Heart right ventricle (tissue), 16 donors: ENCODE measurements at regions of chr5 and their contacts with region 1.

Region 1: DNA sequence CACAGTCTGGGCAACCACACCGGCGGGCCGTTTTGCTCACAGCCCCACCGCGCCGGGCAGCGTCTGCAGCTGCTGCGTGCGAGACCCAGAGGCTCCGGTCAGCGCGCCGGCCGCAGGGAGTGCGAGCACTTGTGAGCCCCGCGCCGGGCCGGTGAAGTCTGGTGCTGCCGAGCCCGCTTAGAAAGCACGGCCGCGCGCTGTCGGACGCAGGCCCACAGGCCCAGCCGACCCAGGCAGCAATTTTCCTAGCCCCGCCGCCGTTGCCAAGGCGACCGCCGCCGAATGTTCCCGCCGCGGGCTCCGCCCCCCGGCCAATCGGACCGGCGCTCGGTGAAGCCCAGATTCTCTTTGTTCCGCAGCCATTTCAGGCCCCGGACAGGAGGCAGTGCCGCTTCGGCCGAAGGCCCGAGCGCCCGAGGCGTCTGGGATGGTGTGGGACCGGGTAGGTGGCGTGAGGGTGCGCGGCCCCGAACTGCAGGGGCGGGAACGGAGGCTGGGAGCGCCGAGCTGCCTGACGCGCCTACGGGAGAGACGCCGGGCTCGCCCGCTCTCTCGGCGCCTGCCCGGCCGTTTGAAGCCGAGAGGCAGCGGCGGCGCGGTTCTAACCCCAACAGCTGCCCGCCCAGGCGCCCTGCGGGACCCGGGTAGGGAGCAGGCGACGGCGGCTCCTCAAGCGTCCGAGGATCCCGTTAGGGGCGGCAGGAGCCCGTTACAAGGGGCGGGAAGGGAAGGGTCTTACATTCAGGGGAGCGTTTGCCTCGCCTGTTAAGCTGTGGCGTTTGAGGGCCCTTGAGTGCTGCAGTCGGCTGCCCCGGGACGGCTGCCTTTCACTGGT is at the start of gene TNPO1:
- DNase-seq: peak; percentile 94 to 95
- ATAC-seq: peak; percentile 94 to 98 (median 96)
- H3K4me3 ChIP-seq: peak within 1 kb of the TSS; percentile 68 to 89 (median 81)
- H3K27ac ChIP-seq: peak within 1 kb of the TSS; percentile 86 to 98 (median 96)
- H3K4me1 ChIP-seq: peaks cover 0 to 35% (median 26%) of the 10 kb centered on the region in 9 donors
- H3K27me3 ChIP-seq: no peaks in the 10 kb centered on the region
- CTCF ChIP-seq: no peak
- total RNA-seq, gene TNPO1: 55.5 to 78.0 (median 70.4) TPM

Region 2: GRCh38 chr5:72366324-72366976 is 450.1 kb before region 1 on chr5:
- intact Hi-C with region 1: loop called in 6 of 10 experiments (anchors 5 to 10 kb)
- DNase-seq: peak; percentile 16 to 84
- ATAC-seq: peak; percentile 85 to 96 (median 90)
- H3K4me3 ChIP-seq: no peak overlapping the region
- H3K27ac ChIP-seq: peak overlapping the region in 5 of 10 donors; percentile 2 to 68 (median 49)
- H3K4me1 ChIP-seq: peaks cover 0 to 47% (median 11%) of the 10 kb centered on the region in 9 donors
- H3K27me3 ChIP-seq: no peaks in the 10 kb centered on the region
- CTCF ChIP-seq: peak; percentile 63 to 92 (median 80)

Region 3: GRCh38 chr5:72556351-72557166 is 260.0 kb before region 1 on chr5:
- intact Hi-C with region 1: loop called in 2 of 10 experiments (anchors 5 to 10 kb)
- DNase-seq: peak; percentile 45 to 69
- ATAC-seq: peak; percentile 73 to 90 (median 82)
- H3K4me3 ChIP-seq: peak overlapping the region in 9 of 10 donors; percentile 21 to 52 (median 44)
- H3K27ac ChIP-seq: peak overlapping the region in 8 of 10 donors; percentile 43 to 81 (median 57)
- H3K4me1 ChIP-seq: peaks cover 9 to 39% (median 20%) of the 10 kb centered on the region in 9 donors
- H3K27me3 ChIP-seq: no peaks in the 10 kb centered on the region
- CTCF ChIP-seq: peak in 2 of 9 donors; percentile 25 to 33

Region 4: DNA sequence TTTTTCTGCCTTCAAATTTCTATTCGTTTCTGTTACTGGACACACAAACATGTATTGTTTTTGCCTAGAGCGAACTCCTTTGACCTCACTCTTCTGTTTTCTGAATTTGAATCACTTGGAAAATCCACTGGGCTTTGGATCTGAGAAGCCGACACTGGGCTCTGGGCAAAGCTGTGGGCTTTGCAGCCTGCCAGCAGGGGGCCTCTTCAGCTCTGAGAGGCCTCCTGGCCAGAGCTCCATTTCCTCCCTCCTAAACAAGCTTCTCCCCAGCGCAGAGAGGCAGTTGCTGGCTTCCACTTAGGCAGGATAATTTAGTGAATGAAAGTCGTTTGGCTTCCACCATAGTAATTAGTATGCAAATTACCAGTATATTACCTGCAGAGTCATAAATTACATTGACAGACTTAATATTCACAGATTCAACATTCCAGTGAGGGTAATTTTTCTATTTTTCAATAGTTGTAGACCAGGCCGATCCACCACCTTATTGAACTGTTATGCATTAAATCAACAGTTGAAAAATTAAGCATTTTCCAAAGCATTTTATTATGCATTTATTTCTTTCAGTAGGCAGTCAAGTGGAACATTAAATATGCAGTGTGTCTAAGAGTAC is 205.3 kb before region 1 on chr5:
- intact Hi-C with region 1: loop called in 9 of 10 experiments (anchors 1 to 10 kb)
- DNase-seq: peak; percentile 70 to 72
- ATAC-seq: peak; percentile 92 to 98 (median 95)
- H3K4me3 ChIP-seq: no peak overlapping the region
- H3K27ac ChIP-seq: no peak overlapping the region
- H3K4me1 ChIP-seq: peaks cover 0 to 15% (median 0%) of the 10 kb centered on the region in 9 donors
- H3K27me3 ChIP-seq: no peaks in the 10 kb centered on the region
- CTCF ChIP-seq: peak; percentile 84 to 98 (median 93)

Region 5: GRCh38 chr5:72711351-72711750 is 105.2 kb before region 1 on chr5:
- intact Hi-C with region 1: no loop called
- DNase-seq: no peak
- ATAC-seq: no peak
- H3K4me3 ChIP-seq: no peak overlapping the region
- H3K27ac ChIP-seq: no peak overlapping the region
- H3K4me1 ChIP-seq: no peaks in the 10 kb centered on the region
- H3K27me3 ChIP-seq: peaks cover 0 to 5% (median 4%) of the 10 kb centered on the region in 7 donors
- CTCF ChIP-seq: no peak

Region 6: GRCh38 chr5:72854419-72854818 is 37.9 kb after region 1 on chr5:
- intact Hi-C with region 1: loop called in 3 of 10 experiments (anchors 2 to 5 kb)
- DNase-seq: no peak
- ATAC-seq: no peak
- H3K4me3 ChIP-seq: no peak overlapping the region
- H3K27ac ChIP-seq: no peak overlapping the region
- H3K4me1 ChIP-seq: peaks cover 0 to 70% (median 58%) of the 10 kb centered on the region in 9 donors
- H3K27me3 ChIP-seq: no peaks in the 10 kb centered on the region
- CTCF ChIP-seq: no peak

Region 7: DNA sequence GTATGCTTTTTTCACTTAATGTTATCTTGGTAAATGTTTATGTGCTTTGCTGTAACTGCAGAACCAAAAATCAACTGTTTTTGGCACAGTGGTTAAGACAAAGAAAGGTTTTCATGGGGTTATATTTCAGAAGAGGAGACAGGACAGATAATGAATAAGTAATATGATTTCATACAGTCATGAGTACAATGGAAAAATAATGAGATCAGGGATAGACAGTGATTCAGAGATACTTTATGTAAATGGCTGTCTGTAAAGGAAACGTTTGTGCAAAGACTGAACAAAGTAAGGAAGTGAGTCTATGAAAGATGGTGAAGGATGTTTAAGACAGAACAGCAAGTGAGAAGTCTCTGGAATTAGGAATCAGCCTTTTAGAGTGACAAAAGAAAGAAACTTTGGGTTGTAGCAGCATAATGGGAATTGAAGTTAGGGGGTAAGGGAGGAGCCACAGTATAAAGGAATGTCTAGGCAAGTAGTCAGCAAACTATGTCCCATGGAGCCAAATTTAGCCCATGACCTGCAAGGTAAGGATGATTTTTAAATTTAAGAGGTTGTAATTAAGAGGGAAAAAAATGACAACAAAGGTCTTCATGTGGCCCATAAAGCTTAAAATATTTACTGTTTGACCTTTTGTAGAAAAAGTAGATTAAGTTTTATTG is 55.0 kb after region 1 on chr5:
- intact Hi-C with region 1: no loop called
- DNase-seq: no peak
- ATAC-seq: peak in 2 of 8 donors; percentile 27 to 64
- H3K4me3 ChIP-seq: no peak overlapping the region
- H3K27ac ChIP-seq: no peak overlapping the region
- H3K4me1 ChIP-seq: peaks cover 0 to 13% (median 7%) of the 10 kb centered on the region in 9 donors
- H3K27me3 ChIP-seq: no peaks in the 10 kb centered on the region
- CTCF ChIP-seq: no peak

Region 8: GRCh38 chr5:72908664-72909063 is 92.1 kb after region 1 on chr5:
- intact Hi-C with region 1: no loop called
- DNase-seq: no peak
- ATAC-seq: no peak
- H3K4me3 ChIP-seq: no peak overlapping the region
- H3K27ac ChIP-seq: no peak overlapping the region
- H3K4me1 ChIP-seq: no peaks in the 10 kb centered on the region
- H3K27me3 ChIP-seq: no peaks in the 10 kb centered on the region
- CTCF ChIP-seq: no peak

Region 9: GRCh38 chr5:72991394-72991793 is 174.9 kb after region 1 on chr5:
- intact Hi-C with region 1: no loop called
- DNase-seq: no peak
- ATAC-seq: no peak
- H3K4me3 ChIP-seq: no peak overlapping the region
- H3K27ac ChIP-seq: no peak overlapping the region
- H3K4me1 ChIP-seq: no peaks in the 10 kb centered on the region
- H3K27me3 ChIP-seq: no peaks in the 10 kb centered on the region
- CTCF ChIP-seq: no peak